ENCODE measurements at regions of chr2 and their contacts with region 1.

Region 1: GRCh38 chr2:179239195-179239594 is 25.4 kb downstream of the SESTD1 start:
- DNase-seq: peak in 1 of 2 experiments; percentile 84
- H3K4me3 ChIP-seq: peak overlapping the region; percentile 31; the same call in 1 of the 2 replicates
- H3K27ac ChIP-seq: peak overlapping the region; percentile 50
- H3K4me1 ChIP-seq: peaks cover 54% of the 10 kb centered on the region
- H3K27me3 ChIP-seq: no peaks in the 10 kb centered on the region
- CTCF ChIP-seq: no peak

Region 2: DNA sequence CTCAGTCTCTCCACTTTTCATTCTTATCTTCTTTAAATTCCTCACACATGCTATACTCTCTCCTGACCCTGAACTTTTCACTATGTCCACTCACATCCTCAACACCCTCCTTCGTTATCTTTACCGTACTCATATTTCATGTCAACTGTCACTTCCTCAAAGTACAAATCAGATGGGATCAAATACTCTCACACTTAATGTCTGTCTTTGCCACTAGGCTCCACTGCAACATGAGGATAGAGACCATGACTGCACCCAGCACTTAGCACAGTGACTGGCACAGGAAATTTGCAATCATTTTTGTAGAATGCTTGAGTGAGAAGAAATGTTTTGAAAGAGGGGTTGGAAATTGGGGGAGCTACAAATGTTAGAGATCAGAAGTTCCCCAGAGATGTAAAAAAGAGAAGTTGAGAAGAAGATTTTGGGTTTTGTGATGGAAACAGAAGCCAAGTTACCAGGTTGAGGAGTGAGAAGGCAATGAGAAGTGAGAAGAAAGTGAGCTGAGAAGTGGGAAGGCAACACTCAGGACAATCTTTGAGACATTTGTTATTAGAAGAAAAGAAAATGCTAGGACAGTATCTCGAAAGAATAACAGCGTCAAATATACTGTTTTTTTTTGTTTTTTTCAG is 276.3 kb before region 1 on chr2:
- CTCF ChIA-PET with region 1: no interaction called
- POLR2A ChIA-PET with region 1: no interaction called
- intact Hi-C with region 1: no loop called
- DNase-seq: peak in 1 of 2 experiments; percentile 30
- H3K4me3 ChIP-seq: no peak overlapping the region
- H3K27ac ChIP-seq: no peak overlapping the region
- H3K4me1 ChIP-seq: no peaks in the 10 kb centered on the region
- H3K27me3 ChIP-seq: no peaks in the 10 kb centered on the region
- CTCF ChIP-seq: no peak

Region 3: GRCh38 chr2:179311101-179311500 is 71.9 kb after region 1 on chr2:
- CTCF ChIA-PET with region 1: no interaction called
- POLR2A ChIA-PET with region 1: interaction called, 20 read pairs
- intact Hi-C with region 1: no loop called
- DNase-seq: no peak
- H3K4me3 ChIP-seq: no peak overlapping the region
- H3K27ac ChIP-seq: no peak overlapping the region
- H3K4me1 ChIP-seq: no peaks in the 10 kb centered on the region
- H3K27me3 ChIP-seq: no peaks in the 10 kb centered on the region
- CTCF ChIP-seq: no peak

Region 4: DNA sequence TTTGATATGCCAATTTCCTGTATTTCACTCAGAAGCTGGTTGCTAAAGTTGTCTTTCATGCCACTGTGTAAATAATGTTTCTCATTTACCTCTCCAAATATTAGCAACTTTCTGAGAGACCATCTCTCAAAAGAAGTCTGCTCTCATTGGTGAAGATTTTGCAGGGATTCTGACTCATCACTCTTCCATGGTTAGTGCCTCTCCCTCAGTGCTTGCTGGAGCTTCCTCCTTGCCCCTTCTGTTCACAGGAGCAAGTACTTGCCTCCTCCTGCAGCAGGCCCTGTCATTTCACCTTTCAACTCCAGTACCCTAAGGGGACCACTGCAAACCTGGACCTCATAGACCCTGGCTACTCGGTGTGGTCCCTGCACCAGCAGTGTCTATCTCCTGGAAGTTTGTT is 453.4 kb after region 1 on chr2:
- CTCF ChIA-PET with region 1: no interaction called
- POLR2A ChIA-PET with region 1: interaction called, 13 read pairs
- intact Hi-C with region 1: no loop called
- DNase-seq: peak in 1 of 2 experiments; percentile 16
- H3K4me3 ChIP-seq: no peak overlapping the region
- H3K27ac ChIP-seq: no peak overlapping the region
- H3K4me1 ChIP-seq: no peaks in the 10 kb centered on the region
- H3K27me3 ChIP-seq: no peaks in the 10 kb centered on the region
- CTCF ChIP-seq: no peak

Region 5: DNA sequence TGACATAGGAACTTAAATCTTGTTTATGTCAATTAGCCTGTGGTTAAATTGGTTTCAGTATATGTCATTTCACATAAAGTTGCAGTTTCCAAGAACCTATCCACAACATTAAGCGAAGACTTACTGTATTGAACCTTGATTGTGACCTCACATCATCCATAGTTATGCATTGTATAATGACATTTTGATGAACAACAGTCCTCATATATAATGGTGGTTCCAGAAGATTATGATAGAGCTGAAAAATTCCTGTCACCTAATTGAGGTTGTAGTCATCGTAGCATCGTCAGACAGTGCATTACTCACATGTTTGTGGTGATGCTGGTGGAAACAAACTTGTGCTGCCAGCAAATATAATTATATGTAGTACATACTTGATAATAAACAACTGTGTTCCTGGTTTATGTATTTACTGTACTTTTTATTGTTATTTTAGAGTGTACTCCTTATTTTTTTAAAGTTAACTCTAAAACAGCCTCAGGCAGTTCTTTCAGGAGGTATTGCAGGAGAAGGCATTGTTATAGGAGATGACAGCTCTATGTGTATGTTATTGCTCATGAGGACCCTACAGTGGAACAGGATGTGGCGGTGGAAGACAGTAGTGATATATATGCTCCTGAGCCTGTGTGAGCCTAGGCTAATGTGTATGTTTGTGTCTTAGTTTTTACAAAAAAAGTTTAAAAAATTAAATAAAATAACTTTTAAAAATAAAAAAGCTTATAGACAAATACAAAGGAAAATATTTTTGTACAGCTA is 1797.8 kb after region 1 on chr2:
- CTCF ChIA-PET with region 1: no interaction called
- POLR2A ChIA-PET with region 1: no interaction called
- intact Hi-C with region 1: no loop called
- DNase-seq: no peak
- H3K4me3 ChIP-seq: no peak overlapping the region
- H3K27ac ChIP-seq: no peak overlapping the region
- H3K4me1 ChIP-seq: 0 out of 2 replicates have a peak, but pooled peaks cover 3% of the 10 kb centered on the region
- H3K27me3 ChIP-seq: no peaks in the 10 kb centered on the region
- CTCF ChIP-seq: no peak

Measured in PC-9 (cell line).